ENCODE measurements at regions of chr2 and their contacts with region 1.

Region 1: GRCh38 chr2:25878361-25879132 is at the start of gene ASXL2:
- DNase-seq: peak; percentile 95 to 98 (median 98)
- ATAC-seq: peak; percentile 95
- H3K4me3 ChIP-seq: peak within 1 kb of the TSS; percentile 94
- H3K4me3 Mint-ChIP-seq: peak within 1 kb of the TSS; percentile 91 to 98 (median 97)
- H3K27ac ChIP-seq: peak within 1 kb of the TSS; percentile 99
- H3K27ac Mint-ChIP-seq: peak within 1 kb of the TSS; percentile 93 to 99 (median 99)
- H3K4me1 ChIP-seq: peaks cover 16 to 21% of the 10 kb centered on the region in 2 donors
- H3K4me1 Mint-ChIP-seq: peaks cover 31 to 50% (median 40%) of the 10 kb centered on the region in 7 donors
- H3K27me3 ChIP-seq: no peaks in the 10 kb centered on the region
- H3K27me3 Mint-ChIP-seq: no peaks in the 10 kb centered on the region
- total RNA-seq, gene ASXL2: 29.2 to 62.1 (median 48.5) TPM

Region 2: GRCh38 chr2:25342372-25343186 is 536.0 kb before region 1 on chr2:
- CTCF ChIA-PET with region 1: no interaction called
- POLR2A ChIA-PET with region 1: no interaction called
- intact Hi-C with region 1: loop called in 1 of 2 experiments (anchors 5 kb)
- DNase-seq: peak; percentile 67 to 88 (median 77)
- ATAC-seq: peak; percentile 95
- H3K4me3 ChIP-seq: peak overlapping the region; percentile 56
- H3K4me3 Mint-ChIP-seq: peak overlapping the region; percentile 68 to 88 (median 78)
- H3K27ac ChIP-seq: no peak overlapping the region
- H3K27ac Mint-ChIP-seq: peak overlapping the region in 6 of 9 donors; percentile 10 to 89 (median 56)
- H3K4me1 ChIP-seq: peaks cover 5 to 29% of the 10 kb centered on the region in 2 donors
- H3K4me1 Mint-ChIP-seq: peaks cover 18 to 30% (median 27%) of the 10 kb centered on the region in 7 donors
- H3K27me3 ChIP-seq: no peaks in the 10 kb centered on the region
- H3K27me3 Mint-ChIP-seq: no peaks in the 10 kb centered on the region

Region 3: GRCh38 chr2:25822190-25823117 is 56.1 kb before region 1 on chr2:
- CTCF ChIA-PET with region 1: no interaction called
- POLR2A ChIA-PET with region 1: interaction called, 6 read pairs
- intact Hi-C with region 1: loop called in 1 of 2 experiments (anchors 1 kb)
- DNase-seq: peak; percentile 43 to 70 (median 61)
- ATAC-seq: peak; percentile 89
- H3K4me3 ChIP-seq: peak overlapping the region; percentile 44
- H3K4me3 Mint-ChIP-seq: peak overlapping the region; percentile 71 to 87 (median 82)
- H3K27ac ChIP-seq: peak overlapping the region; percentile 54
- H3K27ac Mint-ChIP-seq: peak overlapping the region; percentile 63 to 95 (median 84)
- H3K4me1 ChIP-seq: peaks cover 18 to 38% of the 10 kb centered on the region in 2 donors
- H3K4me1 Mint-ChIP-seq: peaks cover 44 to 85% (median 58%) of the 10 kb centered on the region in 7 donors
- H3K27me3 ChIP-seq: no peaks in the 10 kb centered on the region
- H3K27me3 Mint-ChIP-seq: no peaks in the 10 kb centered on the region

Region 4: GRCh38 chr2:25982273-25982967 is 103.9 kb after region 1 on chr2 and contains the start of gene KIF3C:
- CTCF ChIA-PET with region 1: no interaction called
- POLR2A ChIA-PET with region 1: interaction called, 8 read pairs
- intact Hi-C with region 1: loop called (anchors 1 kb)
- DNase-seq: peak; percentile 59 to 76 (median 73)
- ATAC-seq: peak; percentile 93
- H3K4me3 ChIP-seq: peak within 1 kb of the TSS; percentile 64
- H3K4me3 Mint-ChIP-seq: peak within 1 kb of the TSS; percentile 83 to 94 (median 87)
- H3K27ac ChIP-seq: peak within 1 kb of the TSS; percentile 62
- H3K27ac Mint-ChIP-seq: peak within 1 kb of the TSS; percentile 28 to 89 (median 81)
- H3K4me1 ChIP-seq: peaks cover 0 to 5% of the 10 kb centered on the region in 2 donors
- H3K4me1 Mint-ChIP-seq: peaks cover 12 to 24% (median 16%) of the 10 kb centered on the region in 7 donors
- H3K27me3 ChIP-seq: no peaks in the 10 kb centered on the region
- H3K27me3 Mint-ChIP-seq: no peaks in the 10 kb centered on the region
- total RNA-seq, gene KIF3C: 2.9 to 6.3 (median 5.7) TPM

Region 5: GRCh38 chr2:26345545-26346453 is 467.3 kb after region 1 on chr2 and contains the start of gene SELENOI:
- CTCF ChIA-PET with region 1: no interaction called
- POLR2A ChIA-PET with region 1: interaction called, 4 read pairs
- intact Hi-C with region 1: loop called (anchors 1 kb)
- DNase-seq: peak; percentile 99 to 100 (median 99)
- ATAC-seq: peak; percentile 97
- H3K4me3 ChIP-seq: peak within 1 kb of the TSS; percentile 81
- H3K4me3 Mint-ChIP-seq: peak within 1 kb of the TSS; percentile 84 to 100 (median 98)
- H3K27ac ChIP-seq: peak within 1 kb of the TSS; percentile 88
- H3K27ac Mint-ChIP-seq: peak within 1 kb of the TSS; percentile 95 to 100 (median 99)
- H3K4me1 ChIP-seq: peaks cover 24 to 25% of the 10 kb centered on the region in 2 donors
- H3K4me1 Mint-ChIP-seq: peaks cover 28 to 62% (median 40%) of the 10 kb centered on the region in 7 donors
- H3K27me3 ChIP-seq: no peaks in the 10 kb centered on the region
- H3K27me3 Mint-ChIP-seq: no peaks in the 10 kb centered on the region
- total RNA-seq, gene SELENOI: 19.0 to 33.6 (median 22.4) TPM

Region 6: GRCh38 chr2:27291865-27292264 is 1413.3 kb after region 1 on chr2:
- CTCF ChIA-PET with region 1: no interaction called
- POLR2A ChIA-PET with region 1: no interaction called
- intact Hi-C with region 1: no loop called
- DNase-seq: no peak
- ATAC-seq: no peak
- H3K4me3 ChIP-seq: no peak overlapping the region
- H3K4me3 Mint-ChIP-seq: no peak overlapping the region
- H3K27ac ChIP-seq: no peak overlapping the region
- H3K27ac Mint-ChIP-seq: no peak overlapping the region
- H3K4me1 ChIP-seq: no peaks in the 10 kb centered on the region
- H3K4me1 Mint-ChIP-seq: peaks cover 0 to 2% (median 0%) of the 10 kb centered on the region in 7 donors
- H3K27me3 ChIP-seq: no peaks in the 10 kb centered on the region
- H3K27me3 Mint-ChIP-seq: peaks cover 7 to 55% (median 19%) of the 10 kb centered on the region in 5 donors

Region 7: DNA sequence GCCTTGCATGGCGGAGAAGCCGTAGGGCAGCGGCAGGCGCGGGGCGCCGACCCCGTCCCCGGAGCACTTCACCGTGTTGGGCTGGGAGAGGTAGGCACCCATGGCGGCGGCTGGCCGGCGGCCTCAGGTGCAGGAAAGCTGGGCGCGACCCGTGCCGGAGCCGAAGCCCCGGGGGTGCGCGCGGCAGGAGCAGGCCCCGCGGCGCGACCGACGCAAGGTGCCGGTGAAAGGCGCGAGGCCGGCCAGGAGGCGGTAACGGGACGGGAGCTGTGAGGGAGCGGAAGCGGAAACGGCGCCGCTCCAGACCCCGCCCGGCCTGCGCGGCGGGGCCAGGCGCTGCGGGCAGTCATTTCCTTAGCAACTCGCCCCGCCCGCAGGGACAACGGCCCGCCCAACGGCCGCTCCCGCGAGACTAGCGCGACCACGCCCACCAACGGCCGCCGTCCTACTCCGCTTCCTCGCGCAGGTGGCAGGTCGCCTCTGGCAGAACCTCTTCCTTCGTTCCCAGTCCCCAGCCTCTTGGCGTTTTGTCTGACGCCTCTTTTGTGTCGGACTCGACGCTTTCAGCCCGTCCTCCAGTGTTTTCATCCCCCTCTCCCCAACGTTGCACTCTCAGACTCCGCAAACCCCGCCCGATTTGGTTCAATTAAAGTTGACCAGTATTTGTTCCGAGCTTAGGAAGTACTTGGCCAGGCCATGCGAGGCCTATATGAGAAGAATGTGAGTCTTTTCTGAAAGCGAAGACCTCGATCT is 1531.0 kb after region 1 on chr2 and contains the start of gene PPM1G:
- CTCF ChIA-PET with region 1: no interaction called
- POLR2A ChIA-PET with region 1: no interaction called
- intact Hi-C with region 1: loop called in 1 of 2 experiments (anchors 2 kb)
- DNase-seq: peak; percentile 92 to 98 (median 95)
- ATAC-seq: peak; percentile 99
- H3K4me3 ChIP-seq: peak within 1 kb of the TSS; percentile 92
- H3K4me3 Mint-ChIP-seq: peak within 1 kb of the TSS; percentile 87 to 96 (median 92)
- H3K27ac ChIP-seq: peak within 1 kb of the TSS; percentile 89
- H3K27ac Mint-ChIP-seq: peak within 1 kb of the TSS; percentile 89 to 98 (median 95)
- H3K4me1 ChIP-seq: peaks cover 13 to 17% of the 10 kb centered on the region in 2 donors
- H3K4me1 Mint-ChIP-seq: peaks cover 28 to 50% (median 35%) of the 10 kb centered on the region in 7 donors
- H3K27me3 ChIP-seq: no peaks in the 10 kb centered on the region
- H3K27me3 Mint-ChIP-seq: peaks cover 0 to 7% (median 0%) of the 10 kb centered on the region in 5 donors
- total RNA-seq, gene PPM1G: 39.5 to 101 (median 45.1) TPM

Measured in naive thymus-derived CD4-positive, alpha-beta T cell (primary cell).